ENCODE measurements at regions of chr6 and their contacts with region 1.

Region 1: GRCh38 chr6:31952140-31952805 is 6.4 kb downstream of the CFB start:
- DNase-seq: peak; percentile 43 to 68
- ATAC-seq: peak; percentile 83 to 92
- H3K4me3 ChIP-seq: no peak overlapping the region
- H3K27ac ChIP-seq: no peak overlapping the region
- H3K4me1 ChIP-seq: no peaks in the 10 kb centered on the region; the same call in 2 of the 3 replicates
- CTCF ChIP-seq: peak; percentile 71
- EP300 ChIP-seq: no peak
- POLR2A ChIP-seq: no peak
- RAD21 ChIP-seq: peak; percentile 64 to 66

Region 2: GRCh38 chr6:31717499-31718222 is 234.6 kb before region 1 on chr6:
- CTCF ChIA-PET with region 1: no interaction called
- POLR2A ChIA-PET with region 1: no interaction called
- DNase-seq: no peak
- ATAC-seq: no peak
- H3K4me3 ChIP-seq: no peak overlapping the region
- H3K27ac ChIP-seq: no peak overlapping the region
- H3K4me1 ChIP-seq: no peaks in the 10 kb centered on the region
- CTCF ChIP-seq: no peak
- EP300 ChIP-seq: no peak
- POLR2A ChIP-seq: no peak
- RAD21 ChIP-seq: no peak

Region 3: DNA sequence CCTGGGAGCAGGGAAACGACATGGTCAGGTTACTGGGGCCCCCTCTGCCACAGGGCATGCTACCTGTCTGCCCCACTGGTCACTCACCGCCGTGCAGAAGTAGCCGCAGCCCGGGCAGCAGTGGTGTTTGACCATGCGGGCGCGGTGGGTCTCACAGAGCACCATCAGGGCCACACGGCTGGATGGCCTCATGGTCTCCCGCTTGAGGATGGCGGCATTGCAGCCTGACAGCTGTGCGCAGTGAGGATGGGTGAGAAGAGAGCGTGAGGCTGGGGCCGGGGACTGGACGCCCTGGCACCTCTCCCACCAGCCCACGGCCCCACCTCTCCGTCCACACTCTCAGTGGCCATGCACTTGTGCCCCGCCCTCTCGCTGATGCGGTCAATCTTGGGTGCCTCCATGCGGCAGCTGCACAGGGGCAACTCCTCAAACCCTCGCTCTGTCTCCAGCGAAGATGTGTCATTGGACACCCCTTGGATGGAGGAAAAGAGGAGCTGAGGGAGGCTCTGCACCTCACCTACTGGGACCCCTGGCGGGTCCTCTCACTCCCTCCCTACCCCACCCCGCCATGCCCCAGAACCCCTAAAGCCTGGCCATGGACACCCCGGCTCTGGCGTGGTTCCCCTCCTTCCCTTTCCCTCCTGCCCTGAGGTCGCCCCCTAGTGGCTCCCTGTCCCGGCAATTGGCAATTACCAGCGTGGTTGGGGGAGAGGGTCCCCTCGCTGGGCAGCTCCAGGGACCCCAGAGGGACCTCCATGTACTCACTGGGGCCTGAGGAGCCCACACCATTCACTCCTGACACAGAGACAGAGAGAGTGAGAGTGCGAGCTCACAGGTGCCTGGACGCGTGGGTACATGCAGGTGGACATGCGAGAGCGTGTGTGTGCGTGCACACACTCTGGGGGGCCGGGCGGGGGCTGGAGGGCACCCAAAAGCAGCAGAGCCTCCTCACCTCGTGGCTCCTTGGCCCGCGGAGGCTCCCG is 63.7 kb before region 1 on chr6:
- CTCF ChIA-PET with region 1: interaction called, 12 read pairs
- POLR2A ChIA-PET with region 1: no interaction called
- DNase-seq: no peak
- ATAC-seq: peak in 1 of 2 experiments; percentile 74; a peak in 3 of 6 replicates
- H3K4me3 ChIP-seq: no peak overlapping the region
- H3K27ac ChIP-seq: no peak overlapping the region
- H3K4me1 ChIP-seq: no peaks in the 10 kb centered on the region
- CTCF ChIP-seq: peak; percentile 61
- EP300 ChIP-seq: no peak
- POLR2A ChIP-seq: no peak
- RAD21 ChIP-seq: peak; percentile 36 to 39; a peak in 2 of 5 replicates

Region 4: GRCh38 chr6:31901953-31902643 is 50.2 kb before region 1 on chr6 and contains the start of gene ZBTB12:
- CTCF ChIA-PET with region 1: interaction called, 26 read pairs
- POLR2A ChIA-PET with region 1: interaction called, 4 read pairs
- DNase-seq: peak; percentile 77 to 94
- ATAC-seq: peak; percentile 71 to 80
- H3K4me3 ChIP-seq: peak within 1 kb of the TSS; percentile 90
- H3K27ac ChIP-seq: peak within 1 kb of the TSS; percentile 98
- H3K4me1 ChIP-seq: peaks cover 18% of the 10 kb centered on the region
- CTCF ChIP-seq: no peak
- EP300 ChIP-seq: no peak
- POLR2A ChIP-seq: peak; percentile 57
- RAD21 ChIP-seq: peak; percentile 35 to 45; a peak in 4 of 5 replicates
- polyA plus RNA-seq, gene ZBTB12: 2.2 and 2.9 TPM in 2 replicates

Region 5: GRCh38 chr6:31922942-31923341 is 29.3 kb before region 1 on chr6:
- CTCF ChIA-PET with region 1: interaction called, 24 read pairs
- POLR2A ChIA-PET with region 1: no interaction called
- DNase-seq: no peak
- ATAC-seq: peak in 1 of 2 experiments; percentile 52; a peak in 1 of 6 replicates
- H3K4me3 ChIP-seq: no peak overlapping the region
- H3K27ac ChIP-seq: no peak overlapping the region
- H3K4me1 ChIP-seq: peaks cover 14% of the 10 kb centered on the region
- CTCF ChIP-seq: no peak
- EP300 ChIP-seq: no peak
- POLR2A ChIP-seq: no peak
- RAD21 ChIP-seq: no peak; a peak in 1 of 5 replicates

Region 6: GRCh38 chr6:31940256-31940664 is 12.0 kb before region 1 on chr6:
- CTCF ChIA-PET with region 1: interaction called, 16 read pairs
- POLR2A ChIA-PET with region 1: interaction called, 4 read pairs
- DNase-seq: no peak
- ATAC-seq: peak in 1 of 2 experiments; percentile 16; a peak in 1 of 6 replicates
- H3K4me3 ChIP-seq: no peak overlapping the region
- H3K27ac ChIP-seq: peak overlapping the region in 1 of 2 experiments; percentile 50; a peak in 2 of 6 replicates
- H3K4me1 ChIP-seq: peaks cover 21% of the 10 kb centered on the region
- CTCF ChIP-seq: no peak
- EP300 ChIP-seq: no peak
- POLR2A ChIP-seq: no peak
- RAD21 ChIP-seq: no peak

Region 7: GRCh38 chr6:32092760-32093497 is 140.7 kb after region 1 on chr6:
- CTCF ChIA-PET with region 1: no interaction called
- POLR2A ChIA-PET with region 1: no interaction called
- DNase-seq: peak in 1 of 2 experiments; percentile 34
- ATAC-seq: peak; percentile 12 to 52; a peak in 3 of 6 replicates
- H3K4me3 ChIP-seq: no peak overlapping the region
- H3K27ac ChIP-seq: no peak overlapping the region
- H3K4me1 ChIP-seq: peaks cover 11% of the 10 kb centered on the region; the same call in 2 of the 3 replicates
- CTCF ChIP-seq: no peak
- EP300 ChIP-seq: no peak
- POLR2A ChIP-seq: no peak
- RAD21 ChIP-seq: no peak

Measured in A549 (cell line).